ENCODE measurements at regions of chr17 and their contacts with region 1.

Region 1: DNA sequence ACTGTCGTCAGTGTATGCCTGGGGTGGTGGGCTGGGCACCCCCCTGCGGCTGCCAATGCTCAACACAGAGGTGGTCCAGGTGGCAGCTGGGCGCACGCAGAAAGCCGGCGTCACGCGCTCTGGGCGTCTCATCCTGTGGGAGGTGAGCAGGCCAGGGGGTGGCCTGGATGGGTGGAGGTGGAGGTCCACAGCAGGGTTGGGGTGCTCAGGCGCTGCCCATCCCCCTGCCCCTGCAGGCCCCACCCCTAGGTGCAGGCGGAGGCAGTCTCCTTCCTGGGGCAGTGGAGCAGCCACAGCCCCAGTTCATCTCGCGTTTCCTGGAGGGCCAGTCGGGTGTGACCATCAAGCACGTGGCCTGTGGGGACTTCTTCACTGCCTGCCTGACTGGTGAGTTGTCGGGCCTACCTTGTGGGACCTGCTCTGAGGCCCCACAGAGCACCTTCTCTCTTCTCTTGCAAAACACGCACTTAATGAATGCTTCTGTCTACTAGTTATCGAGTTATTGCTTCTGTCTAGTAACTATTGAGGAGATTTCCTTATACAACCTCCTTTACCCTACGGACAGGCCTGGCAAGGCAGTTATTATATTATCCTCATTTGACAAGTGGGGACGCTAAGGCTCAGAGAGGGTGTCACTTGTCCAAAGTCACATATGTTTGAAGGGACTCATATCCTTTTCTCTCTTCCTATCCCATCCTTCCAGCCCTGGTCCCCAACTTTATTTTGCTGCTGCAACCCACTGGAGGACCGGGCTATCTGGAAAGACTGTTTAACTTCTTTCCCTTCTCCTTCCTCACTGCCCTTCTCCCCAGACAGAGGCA is 5.7 kb upstream of the TRAF4 start:
- DNase-seq: peak; percentile 96
- H3K4me3 ChIP-seq: peak overlapping the region; percentile 60
- H3K27ac ChIP-seq: peak overlapping the region; percentile 95
- H3K4me1 ChIP-seq: peaks cover 68% of the 10 kb centered on the region
- CTCF ChIP-seq: no peak

Region 2: GRCh38 chr17:28750178-28751047 is 12.3 kb after region 1 on chr17:
- CTCF ChIA-PET with region 1: interaction called, 3 read pairs
- POLR2A ChIA-PET with region 1: interaction called, 5 read pairs
- intact Hi-C with region 1: loop called (anchors 1 kb)
- DNase-seq: peak; percentile 93
- H3K4me3 ChIP-seq: no peak overlapping the region
- H3K27ac ChIP-seq: no peak overlapping the region
- H3K4me1 ChIP-seq: peaks cover 33% of the 10 kb centered on the region
- CTCF ChIP-seq: peak; percentile 99

Measured in OCI-LY7 (cell line).